ENCODE measurements at regions of chr13 and their contacts with region 1.

Region 1: GRCh38 chr13:39095500-39095899 is 57.2 kb downstream of the NHLRC3 start:
- DNase-seq: no peak
- H3K4me3 Mint-ChIP-seq: peak overlapping the region; percentile 54
- H3K27ac Mint-ChIP-seq: peak overlapping the region; percentile 87
- H3K4me1 Mint-ChIP-seq: peaks cover 35% of the 10 kb centered on the region
- H3K27me3 Mint-ChIP-seq: no peaks in the 10 kb centered on the region

Region 2: DNA sequence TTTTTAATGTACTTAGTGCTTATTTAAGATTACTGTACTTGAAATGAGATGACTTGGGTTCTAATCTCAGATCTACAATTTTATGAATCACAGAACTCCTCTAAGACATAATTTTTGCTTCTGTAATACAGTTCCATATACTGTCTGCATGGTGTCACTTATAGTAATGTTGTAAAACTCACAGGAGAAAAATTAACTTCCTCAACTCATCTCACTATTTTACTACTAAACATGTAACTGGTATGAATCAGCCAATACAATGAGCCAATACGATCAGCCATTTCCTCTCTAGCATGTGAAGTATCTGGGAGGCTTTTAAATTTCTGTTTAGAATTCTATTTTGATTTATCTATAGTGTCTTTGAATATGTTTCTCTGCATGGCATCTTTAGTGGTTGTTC is 28.1 kb after region 1 on chr13:
- CTCF ChIA-PET with region 1: no interaction called
- POLR2A ChIA-PET with region 1: no interaction called
- intact Hi-C with region 1: loop called (anchors 1 kb)
- DNase-seq: no peak
- H3K4me3 Mint-ChIP-seq: no peak overlapping the region
- H3K27ac Mint-ChIP-seq: no peak overlapping the region
- H3K4me1 Mint-ChIP-seq: peaks cover 8% of the 10 kb centered on the region
- H3K27me3 Mint-ChIP-seq: peaks cover 5% of the 10 kb centered on the region

Region 3: GRCh38 chr13:39209731-39210531 is 114.4 kb after region 1 on chr13:
- CTCF ChIA-PET with region 1: no interaction called
- POLR2A ChIA-PET with region 1: no interaction called
- intact Hi-C with region 1: no loop called
- DNase-seq: no peak
- H3K4me3 Mint-ChIP-seq: no peak overlapping the region
- H3K27ac Mint-ChIP-seq: no peak overlapping the region
- H3K4me1 Mint-ChIP-seq: no peaks in the 10 kb centered on the region
- H3K27me3 Mint-ChIP-seq: peaks cover 3% of the 10 kb centered on the region

Region 4: GRCh38 chr13:39263033-39263432 is 167.5 kb after region 1 on chr13:
- CTCF ChIA-PET with region 1: no interaction called
- POLR2A ChIA-PET with region 1: no interaction called
- intact Hi-C with region 1: loop called (anchors 1 kb)
- DNase-seq: peak; percentile 63
- H3K4me3 Mint-ChIP-seq: no peak overlapping the region
- H3K27ac Mint-ChIP-seq: no peak overlapping the region
- H3K4me1 Mint-ChIP-seq: peaks cover 19% of the 10 kb centered on the region
- H3K27me3 Mint-ChIP-seq: no peaks in the 10 kb centered on the region

Region 5: GRCh38 chr13:39306639-39307589 is 211.4 kb after region 1 on chr13:
- CTCF ChIA-PET with region 1: no interaction called
- POLR2A ChIA-PET with region 1: no interaction called
- intact Hi-C with region 1: loop called (anchors 1 kb)
- DNase-seq: peak; percentile 72
- H3K4me3 Mint-ChIP-seq: peak overlapping the region; percentile 7
- H3K27ac Mint-ChIP-seq: peak overlapping the region; percentile 28
- H3K4me1 Mint-ChIP-seq: peaks cover 21% of the 10 kb centered on the region
- H3K27me3 Mint-ChIP-seq: peaks cover 8% of the 10 kb centered on the region

Measured in activated CD4-positive, alpha-beta memory T cell treated with anti-CD3 and anti-CD28 coated beads for 36 hours (primary cell).